Heart left ventricle (tissue), 16 donors: ENCODE measurements at regions of chr5 and their contacts with region 1.

Region 1: DNA sequence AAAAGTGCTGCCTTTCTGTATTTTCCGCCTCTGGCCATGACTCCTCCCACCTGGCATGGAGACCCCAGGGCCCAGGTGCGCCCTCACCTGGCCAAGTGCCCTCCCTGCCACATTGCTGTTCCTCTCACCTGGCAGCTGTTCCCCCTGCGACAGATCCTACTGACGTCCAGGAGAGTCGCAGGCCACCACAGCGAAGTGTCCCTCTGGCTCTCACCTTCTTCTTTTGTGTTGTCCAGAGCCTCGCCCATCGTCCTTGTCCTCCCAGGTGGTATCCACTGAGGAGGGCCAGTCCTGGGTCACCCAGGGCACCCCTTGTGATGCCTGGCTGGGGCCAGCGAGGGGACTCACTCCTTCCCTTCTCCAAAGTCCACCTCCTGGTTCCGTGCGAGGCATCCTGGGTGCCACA is 2.6 kb downstream of the NKD2 start:
- DNase-seq: peak in 4 of 5 donors; percentile 13 to 52 (median 20)
- ATAC-seq: no peak
- H3K4me3 ChIP-seq: no peak overlapping the region
- H3K27ac ChIP-seq: no peak overlapping the region
- H3K4me1 ChIP-seq: peaks cover 0 to 30% (median 18%) of the 10 kb centered on the region in 12 donors
- H3K27me3 ChIP-seq: peaks cover 6 to 37% (median 11%) of the 10 kb centered on the region in 9 donors
- CTCF ChIP-seq: peak in 6 of 12 donors; percentile 9 to 37 (median 20)
- POLR2A ChIP-seq: no peak

Region 2: GRCh38 chr5:1058988-1059883 is 48.0 kb after region 1 on chr5:
- intact Hi-C with region 1: loop called in 1 of 10 experiments (anchors 1 kb)
- DNase-seq: peak in 2 of 5 donors; percentile 20 to 69
- ATAC-seq: no peak
- H3K4me3 ChIP-seq: no peak overlapping the region
- H3K27ac ChIP-seq: no peak overlapping the region
- H3K4me1 ChIP-seq: peaks cover 0 to under 1% (median 0%) of the 10 kb centered on the region in 12 donors
- H3K27me3 ChIP-seq: no peaks in the 10 kb centered on the region
- CTCF ChIP-seq: no peak
- POLR2A ChIP-seq: no peak

Region 3: GRCh38 chr5:1090538-1090937 is 79.3 kb after region 1 on chr5:
- intact Hi-C with region 1: no loop called
- DNase-seq: peak; percentile 63 to 83 (median 74)
- ATAC-seq: peak; percentile 1 to 52 (median 28)
- H3K4me3 ChIP-seq: no peak overlapping the region
- H3K27ac ChIP-seq: peak overlapping the region; percentile 31 to 81 (median 53)
- H3K4me1 ChIP-seq: peaks cover 0 to 56% (median 29%) of the 10 kb centered on the region in 12 donors
- H3K27me3 ChIP-seq: no peaks in the 10 kb centered on the region
- CTCF ChIP-seq: no peak
- POLR2A ChIP-seq: no peak

Region 4: DNA sequence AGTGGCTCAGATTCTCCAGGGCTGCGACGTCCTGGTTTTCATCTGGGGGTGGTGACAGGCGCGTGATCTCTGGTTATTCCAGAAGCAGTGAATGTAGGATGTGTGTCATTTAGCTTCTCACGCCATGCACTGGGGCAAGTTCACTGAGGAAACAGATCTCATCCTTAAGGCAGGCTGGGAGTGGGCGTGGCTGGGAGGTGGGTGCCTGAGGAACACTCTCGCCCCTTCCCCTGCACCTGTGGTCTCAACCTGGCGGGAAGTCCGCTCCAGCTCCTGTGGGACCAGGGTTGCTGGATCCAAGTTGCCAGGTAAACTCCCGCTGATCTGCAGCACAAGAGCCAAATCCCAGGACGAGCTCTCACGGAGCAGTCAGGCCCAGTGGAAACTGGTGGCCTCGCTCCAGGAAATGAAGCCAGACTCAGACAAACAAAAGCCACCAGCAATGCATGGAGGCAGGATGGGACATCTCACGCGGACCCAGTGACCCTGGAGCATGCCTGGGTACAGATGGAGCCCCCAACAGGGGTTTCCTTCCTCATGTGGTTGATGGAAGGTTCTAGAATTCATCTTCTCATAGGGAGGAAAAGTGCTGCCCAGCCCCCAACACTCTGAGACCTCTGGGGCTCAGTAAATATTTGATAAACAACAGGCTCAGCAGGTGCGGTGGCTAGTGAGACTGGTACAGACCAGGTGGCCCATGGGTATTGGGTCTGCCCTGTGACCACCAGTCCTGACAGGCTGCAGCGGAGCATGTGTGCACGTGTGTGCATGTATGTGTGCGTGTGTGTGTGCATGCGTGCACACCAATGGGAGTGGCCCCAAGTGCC is 116.9 kb after region 1 on chr5:
- intact Hi-C with region 1: no loop called
- DNase-seq: peak in 4 of 5 donors; percentile 74 to 87 (median 76)
- ATAC-seq: peak; percentile 14 to 50 (median 28)
- H3K4me3 ChIP-seq: no peak overlapping the region
- H3K27ac ChIP-seq: peak overlapping the region; percentile 23 to 92 (median 68)
- H3K4me1 ChIP-seq: peaks cover 3 to 73% (median 48%) of the 10 kb centered on the region in 12 donors
- H3K27me3 ChIP-seq: no peaks in the 10 kb centered on the region
- CTCF ChIP-seq: no peak
- POLR2A ChIP-seq: no peak